Activated CD4-positive, alpha-beta memory T cell treated with anti-CD3 and anti-CD28 coated beads for 36 hours (primary cell): ENCODE measurements at regions of chr4 and their contacts with region 1.

Region 1: DNA sequence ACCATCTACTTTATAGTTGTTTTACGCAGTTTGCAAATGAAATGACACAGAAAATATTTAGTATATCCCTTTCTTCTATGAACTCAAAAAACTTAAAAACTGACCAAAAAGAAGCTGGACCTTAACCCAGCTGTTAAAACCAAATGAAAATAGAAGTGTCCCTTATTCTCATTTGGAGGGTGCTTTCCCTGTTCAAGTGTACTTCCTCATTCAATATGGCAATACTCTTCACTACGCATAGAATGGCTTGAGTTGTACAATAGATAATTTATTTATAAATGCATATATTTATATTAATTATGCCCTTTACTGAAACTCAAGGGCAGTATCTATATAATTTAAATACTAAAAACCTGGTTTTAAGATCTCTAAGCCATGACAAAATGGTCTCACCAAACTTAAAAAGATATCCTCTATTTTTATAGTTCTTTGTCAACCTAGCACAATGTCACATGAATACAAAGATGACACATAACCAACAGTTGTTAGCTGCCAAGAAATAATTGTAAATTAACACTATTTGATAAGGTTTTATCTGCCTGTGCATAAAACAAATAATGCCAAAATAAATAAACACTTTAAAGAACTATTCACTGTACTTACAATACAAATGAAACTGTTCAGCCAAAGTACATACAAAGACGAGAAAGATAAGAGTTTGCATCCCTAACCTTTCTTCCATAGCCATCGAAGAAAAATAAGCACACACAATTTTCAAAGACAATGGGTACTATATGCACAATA is 25.2 kb downstream of the YTHDC1 start:
- DNase-seq: no peak
- H3K4me3 Mint-ChIP-seq: no peak overlapping the region
- H3K27ac Mint-ChIP-seq: no peak overlapping the region
- H3K4me1 Mint-ChIP-seq: no peaks in the 10 kb centered on the region
- H3K27me3 Mint-ChIP-seq: no peaks in the 10 kb centered on the region

Region 2: DNA sequence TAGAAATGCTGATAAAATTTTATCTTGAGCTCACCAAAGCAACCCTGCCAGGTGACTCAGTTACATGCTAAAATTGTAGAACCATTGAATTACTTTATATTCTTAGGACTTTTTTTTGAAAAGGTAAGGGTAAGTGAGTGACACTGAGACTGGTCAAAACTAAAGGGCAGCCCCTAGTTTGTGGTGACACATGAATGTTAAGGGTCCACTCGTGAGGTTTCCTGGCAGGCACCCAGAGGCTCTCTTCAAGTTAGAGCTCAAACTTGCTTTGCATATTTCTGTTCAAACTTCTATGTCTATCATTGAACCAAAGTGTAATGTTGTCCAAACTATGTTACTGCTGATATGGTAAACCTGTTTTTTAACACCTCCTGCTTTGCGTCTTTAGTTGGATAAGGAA is 471.4 kb before region 1 on chr4:
- CTCF ChIA-PET with region 1: no interaction called
- POLR2A ChIA-PET with region 1: no interaction called
- intact Hi-C with region 1: no loop called
- DNase-seq: no peak
- H3K4me3 Mint-ChIP-seq: no peak overlapping the region
- H3K27ac Mint-ChIP-seq: no peak overlapping the region
- H3K4me1 Mint-ChIP-seq: no peaks in the 10 kb centered on the region
- H3K27me3 Mint-ChIP-seq: peaks cover 3% of the 10 kb centered on the region

Region 3: DNA sequence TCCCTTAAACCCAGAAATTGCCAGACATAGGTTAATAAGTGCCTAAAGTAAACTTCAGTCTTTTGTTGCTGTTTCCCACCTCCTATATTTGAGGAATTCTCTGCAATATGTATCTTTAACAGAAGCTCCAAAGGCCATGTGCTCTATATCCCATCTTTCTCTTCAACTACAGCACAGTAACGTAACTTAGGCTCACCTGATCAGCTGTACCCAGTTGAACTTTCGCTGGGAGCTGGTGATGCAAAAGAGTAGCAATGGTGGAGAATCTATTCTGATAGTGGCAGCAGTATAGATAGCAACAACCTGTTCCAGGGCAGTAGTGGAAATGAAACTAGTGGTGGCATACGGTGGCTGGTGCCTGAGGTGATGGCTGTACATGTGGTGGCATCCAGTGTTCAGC is 58.4 kb after region 1 on chr4:
- CTCF ChIA-PET with region 1: no interaction called
- POLR2A ChIA-PET with region 1: no interaction called
- intact Hi-C with region 1: loop called (anchors 10 kb)
- DNase-seq: no peak
- H3K4me3 Mint-ChIP-seq: no peak overlapping the region
- H3K27ac Mint-ChIP-seq: no peak overlapping the region
- H3K4me1 Mint-ChIP-seq: no peaks in the 10 kb centered on the region
- H3K27me3 Mint-ChIP-seq: peaks cover 6% of the 10 kb centered on the region